Mammary epithelial cell (primary cell): ENCODE measurements at regions of chr17 and their contacts with region 1.

Region 1: DNA sequence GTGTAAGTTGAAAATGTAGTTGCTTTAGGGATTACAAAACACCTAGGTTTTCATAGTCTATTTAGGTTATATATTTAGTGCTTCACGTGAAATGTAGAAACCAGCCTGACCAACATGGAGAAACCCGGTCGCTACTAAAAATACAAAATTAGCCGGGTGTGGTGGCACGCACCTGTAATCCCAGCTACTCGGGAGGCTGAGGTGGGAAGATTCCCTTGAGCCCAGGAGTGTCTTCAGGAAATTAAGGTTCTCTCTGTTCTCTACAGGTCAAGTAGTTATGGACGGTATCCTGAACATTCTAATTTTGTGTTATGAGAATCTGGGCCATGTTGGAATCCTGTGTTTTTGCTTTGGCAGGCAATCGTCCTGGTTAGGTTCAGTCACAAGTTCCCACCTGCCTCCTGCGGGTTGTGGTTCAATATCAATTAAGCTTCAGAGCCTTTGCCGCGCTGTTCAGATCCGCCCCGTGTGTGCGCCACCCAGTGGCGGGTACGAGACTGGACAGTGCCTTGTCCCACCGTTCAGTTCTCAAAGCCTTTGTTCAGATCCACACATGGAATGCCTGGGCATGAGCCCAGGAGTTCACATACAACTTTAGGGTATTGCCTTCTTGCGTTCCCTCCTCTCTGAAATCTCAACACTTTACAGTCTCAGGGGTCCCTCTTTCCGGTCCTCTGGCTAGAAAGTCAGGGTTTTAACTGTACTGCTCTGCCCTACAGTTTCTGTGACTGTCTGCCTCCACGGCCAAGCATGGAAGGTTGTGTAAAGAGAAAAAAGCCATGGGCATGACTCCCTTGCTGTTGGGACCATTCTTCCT is 41.7 kb downstream of the HEATR6 start:
- DNase-seq: peak; percentile 75
- H3K4me3 ChIP-seq: no peak overlapping the region
- H3K27ac ChIP-seq: no peak overlapping the region
- H3K4me1 ChIP-seq: no peaks in the 10 kb centered on the region
- H3K27me3 ChIP-seq: no peaks in the 10 kb centered on the region
- CTCF ChIP-seq: peak; percentile 96 to 98

Region 2: DNA sequence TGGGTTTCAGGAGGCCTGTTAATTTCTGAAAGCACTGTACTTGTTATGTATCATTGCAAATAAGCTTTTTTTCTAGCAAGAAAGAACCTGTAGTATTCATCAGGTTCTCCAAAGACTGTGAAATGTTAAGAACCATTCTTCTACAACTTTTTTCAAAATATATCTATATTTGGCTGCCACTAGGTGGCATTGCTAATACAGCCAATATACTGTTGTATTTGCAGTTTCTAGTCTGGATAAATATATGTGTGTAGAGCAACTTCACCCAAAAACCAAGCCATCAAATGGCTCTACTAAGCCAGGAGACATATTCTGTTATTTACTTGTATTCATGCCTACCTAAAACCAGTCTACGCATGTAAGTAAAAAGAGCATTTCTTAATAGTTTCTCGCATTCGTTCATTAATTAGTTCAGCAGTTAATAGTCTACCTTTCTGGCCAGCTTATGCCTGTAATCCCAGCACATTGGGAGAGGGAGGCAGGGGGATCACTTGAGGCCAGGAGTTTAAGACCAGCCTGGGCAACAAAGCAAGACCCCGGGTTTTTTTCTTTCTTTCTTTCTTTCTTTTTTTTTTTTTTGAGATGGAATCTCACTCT is 290.1 kb before region 1 on chr17:
- CTCF ChIA-PET with region 1: no interaction called
- dilution Hi-C with region 1: loop called (anchors 25 kb)
- in situ Hi-C with region 1: loop called in 1 of 2 experiments (anchors 25 kb)
- intact Hi-C with region 1: loop called (anchors 5 kb)
- DNase-seq: peak; percentile 37
- H3K4me3 ChIP-seq: no peak overlapping the region
- H3K27ac ChIP-seq: no peak overlapping the region
- H3K4me1 ChIP-seq: no peaks in the 10 kb centered on the region
- H3K27me3 ChIP-seq: no peaks in the 10 kb centered on the region
- CTCF ChIP-seq: peak; percentile 48 to 63

Region 3: DNA sequence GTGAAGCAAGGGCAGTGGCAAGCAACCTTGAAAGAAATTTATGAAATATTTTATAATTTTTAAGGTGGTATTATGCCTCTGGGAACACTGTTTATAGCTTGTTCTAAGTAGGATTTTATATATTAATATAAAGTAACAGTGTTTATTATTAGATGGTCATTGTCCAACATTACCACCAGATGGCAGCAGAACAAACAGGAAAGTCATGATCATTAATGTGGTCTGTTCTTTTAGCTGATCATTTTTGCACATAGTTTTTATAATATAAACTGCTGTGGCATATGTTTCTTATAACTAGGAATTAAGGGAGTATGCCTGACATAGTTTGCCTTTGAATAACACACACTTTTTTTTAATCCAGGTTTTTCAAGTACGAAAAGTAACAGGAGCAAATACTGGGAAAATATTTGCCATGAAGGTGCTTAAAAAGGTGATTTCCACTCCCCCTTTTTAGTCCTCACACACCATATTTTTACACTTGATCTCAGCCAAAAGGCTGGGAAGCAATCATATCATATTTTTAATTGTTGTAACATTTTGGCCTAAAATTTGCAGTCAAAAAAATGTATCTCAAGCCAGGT is 122.6 kb before region 1 on chr17:
- CTCF ChIA-PET with region 1: no interaction called
- dilution Hi-C with region 1: no loop called
- in situ Hi-C with region 1: loop called in 1 of 2 experiments (anchors 10 kb)
- intact Hi-C with region 1: loop called (anchors 5 kb)
- DNase-seq: peak; percentile 24
- H3K4me3 ChIP-seq: no peak overlapping the region
- H3K27ac ChIP-seq: no peak overlapping the region
- H3K4me1 ChIP-seq: no peaks in the 10 kb centered on the region
- H3K27me3 ChIP-seq: no peaks in the 10 kb centered on the region
- CTCF ChIP-seq: peak; percentile 60 to 61

Region 4: DNA sequence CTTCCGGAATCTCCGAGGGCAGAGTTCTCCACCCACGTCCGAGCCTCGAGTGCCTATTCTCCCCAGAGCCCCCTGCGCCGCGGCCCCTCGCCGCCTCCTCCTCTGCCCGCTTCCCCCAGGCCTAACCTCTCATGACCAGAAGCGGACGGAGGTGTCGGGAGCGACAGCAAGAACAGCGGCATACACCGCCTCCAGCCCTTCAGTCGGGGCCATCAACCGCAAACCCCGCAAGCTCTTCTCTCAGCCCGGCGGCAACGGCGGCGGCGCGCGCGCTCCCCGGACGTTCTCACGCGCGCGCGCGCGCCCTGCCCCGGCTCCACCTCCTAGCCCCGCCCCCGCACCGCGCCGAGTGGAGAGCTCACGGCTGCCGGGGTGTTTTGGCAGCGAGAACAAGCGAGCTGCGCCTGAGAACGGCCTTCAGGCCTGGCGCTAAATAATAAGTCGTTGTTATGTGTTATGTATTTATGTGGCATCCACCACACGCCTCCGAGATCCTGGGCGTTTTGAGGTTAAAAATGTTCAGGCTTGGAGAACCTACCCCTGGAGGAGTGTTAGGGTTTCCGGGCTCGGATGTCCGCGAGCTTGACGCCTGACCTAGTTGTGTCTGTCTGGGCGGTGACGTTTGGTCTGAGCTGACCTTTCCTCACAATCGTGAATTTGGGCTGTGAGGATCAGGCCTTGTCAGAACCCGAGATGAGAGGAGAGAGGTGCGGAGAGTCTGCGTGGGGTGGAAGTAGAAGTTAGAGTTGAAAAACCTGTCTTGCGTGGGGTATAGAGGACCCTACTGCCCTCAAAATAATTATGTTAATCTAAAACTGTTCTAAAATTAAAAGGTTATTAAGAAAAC is 72.3 kb before region 1 on chr17 and contains the start of gene RNFT1:
- CTCF ChIA-PET with region 1: no interaction called
- dilution Hi-C with region 1: no loop called
- in situ Hi-C with region 1: no loop called
- intact Hi-C with region 1: loop called (anchors 5 kb)
- DNase-seq: peak; percentile 80
- H3K4me3 ChIP-seq: peak within 1 kb of the TSS; percentile 81 to 99 (median 86)
- H3K27ac ChIP-seq: peak within 1 kb of the TSS; percentile 83
- H3K4me1 ChIP-seq: no peaks in the 10 kb centered on the region
- H3K27me3 ChIP-seq: no peaks in the 10 kb centered on the region
- CTCF ChIP-seq: no peak
- total RNA-seq, gene RNFT1: 15.3 to 17.3 TPM

Region 5: GRCh38 chr17:60077672-60078519 is 40.9 kb after region 1 on chr17:
- CTCF ChIA-PET with region 1: no interaction called
- dilution Hi-C with region 1: no loop called
- in situ Hi-C with region 1: no loop called
- intact Hi-C with region 1: no loop called
- DNase-seq: no peak
- H3K4me3 ChIP-seq: peak overlapping the region; percentile 65 to 86 (median 81)
- H3K27ac ChIP-seq: no peak overlapping the region
- H3K4me1 ChIP-seq: peaks cover 47% of the 10 kb centered on the region
- H3K27me3 ChIP-seq: no peaks in the 10 kb centered on the region
- CTCF ChIP-seq: no peak